Endothelial cell of umbilical vein (primary cell): ENCODE measurements at regions of chr22 and their contacts with region 1.

Region 1: DNA sequence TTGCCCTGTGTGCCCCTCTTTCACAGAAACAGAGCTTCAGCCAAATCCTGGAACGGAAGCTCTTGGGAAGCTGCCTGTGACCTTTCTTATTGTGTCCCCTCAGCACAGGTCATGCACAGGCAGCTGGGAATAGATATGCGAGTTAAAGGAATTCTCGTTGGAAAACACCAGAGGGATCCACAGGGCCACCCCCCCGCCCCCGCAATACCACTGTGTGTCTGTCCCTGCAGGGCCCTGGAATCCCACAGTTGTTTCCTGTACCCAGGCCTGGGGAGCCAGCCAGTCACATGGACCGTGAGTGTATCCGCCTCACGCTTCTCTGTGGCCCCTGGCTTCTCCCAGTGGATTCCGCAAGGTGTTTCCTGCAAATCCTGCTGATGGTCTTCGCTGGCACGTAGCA is 29.0 kb downstream of the TIMP3 start:
- DNase-seq: peak; percentile 58
- H3K4me3 ChIP-seq: no peak overlapping the region
- H3K27ac ChIP-seq: no peak overlapping the region
- H3K4me1 ChIP-seq: peaks cover 4% of the 10 kb centered on the region
- H3K27me3 ChIP-seq: no peaks in the 10 kb centered on the region
- CTCF ChIP-seq: no peak
- POLR2A ChIP-seq: no peak

Region 2: DNA sequence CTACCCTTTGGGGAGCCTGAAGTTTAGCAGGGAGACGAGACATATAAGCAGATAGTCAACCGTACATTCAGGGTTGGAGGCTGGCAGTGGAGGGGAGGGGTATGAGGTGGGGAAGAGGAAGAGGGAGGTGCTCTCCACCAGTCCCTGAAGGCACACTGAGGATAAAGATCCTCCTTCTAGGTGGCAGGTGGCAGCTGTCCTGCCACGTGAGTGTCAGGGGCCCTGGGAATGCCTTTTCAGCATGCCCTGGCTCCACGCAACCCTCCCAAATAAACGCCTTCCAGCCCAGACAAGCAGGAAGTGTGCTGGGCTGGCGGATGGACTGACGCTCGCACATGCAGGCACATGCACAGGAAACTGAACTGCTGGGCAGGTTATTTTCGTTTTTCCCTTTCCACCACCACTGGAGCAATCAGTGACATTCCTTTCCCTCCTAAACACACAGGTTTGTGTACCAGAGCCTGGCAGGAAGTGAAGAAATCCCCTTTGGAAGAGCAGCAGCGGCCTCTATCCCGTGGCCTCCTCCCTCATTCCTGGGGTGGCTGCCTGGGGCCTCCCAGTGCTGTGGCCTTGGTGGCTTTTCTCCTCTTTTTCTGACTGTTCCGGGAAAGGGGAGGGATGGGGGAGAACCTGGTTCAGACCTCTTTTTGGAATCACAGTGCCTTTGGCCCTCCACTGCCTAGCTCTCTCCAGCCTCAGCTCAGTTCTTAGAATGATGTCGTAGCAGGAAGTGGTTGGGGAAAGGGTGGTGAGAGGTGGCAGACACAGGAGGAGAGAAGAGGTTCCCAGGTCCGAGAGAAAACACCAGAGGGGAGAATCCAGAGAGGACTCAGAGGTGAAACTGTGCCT is 186.0 kb before region 1 on chr22:
- CTCF ChIA-PET with region 1: no interaction called
- POLR2A ChIA-PET with region 1: no interaction called
- dilution Hi-C with region 1: no loop called
- intact Hi-C with region 1: loop called (anchors 1 kb)
- DNase-seq: no peak
- H3K4me3 ChIP-seq: no peak overlapping the region
- H3K27ac ChIP-seq: no peak overlapping the region
- H3K4me1 ChIP-seq: no peaks in the 10 kb centered on the region
- H3K27me3 ChIP-seq: no peaks in the 10 kb centered on the region
- CTCF ChIP-seq: no peak
- POLR2A ChIP-seq: no peak

Region 3: DNA sequence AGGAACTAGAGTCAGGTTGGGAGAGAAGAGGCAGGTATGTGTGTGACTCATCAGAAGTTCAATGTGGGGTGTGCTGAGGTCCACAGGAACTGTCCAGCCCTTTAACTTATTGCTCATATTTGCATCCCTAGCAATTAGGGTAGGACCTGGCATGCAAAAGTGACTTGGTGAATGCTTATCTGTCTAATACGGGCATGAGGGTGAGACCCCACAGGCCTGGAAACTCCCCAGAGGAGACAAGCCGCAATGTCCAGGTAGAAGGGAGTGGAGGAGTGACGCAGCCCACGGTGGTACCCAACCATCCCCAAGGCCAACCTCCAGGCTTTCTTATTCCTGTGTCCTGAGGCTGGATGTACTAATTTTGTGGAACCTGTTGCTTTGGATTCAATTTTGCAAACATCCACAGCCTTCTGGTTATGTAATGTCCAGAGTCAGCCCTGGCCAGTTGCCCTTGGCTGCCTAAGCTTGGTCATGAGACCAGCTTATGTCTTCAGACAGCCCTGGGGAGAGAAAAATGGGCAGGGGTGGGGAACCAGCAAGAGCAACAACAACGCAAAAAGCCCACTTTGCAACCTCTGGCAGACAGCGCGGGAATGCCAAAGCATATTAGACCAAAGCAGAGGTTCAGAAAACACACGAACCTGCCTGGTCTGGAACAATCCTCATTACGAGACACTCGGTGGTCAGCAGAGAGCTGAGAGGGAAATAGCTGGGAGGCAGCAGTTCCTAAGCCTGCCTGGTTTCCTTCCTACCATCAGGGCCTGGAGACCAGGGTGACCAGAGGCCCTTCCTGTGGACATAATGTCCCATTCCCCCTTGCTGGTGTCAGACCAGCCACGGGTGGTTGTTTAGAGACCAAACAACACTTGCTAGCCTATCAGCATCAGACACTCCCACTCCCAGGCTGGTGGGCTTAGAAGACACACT is 20.4 kb after region 1 on chr22:
- CTCF ChIA-PET with region 1: no interaction called
- POLR2A ChIA-PET with region 1: no interaction called
- dilution Hi-C with region 1: no loop called
- intact Hi-C with region 1: no loop called
- DNase-seq: no peak
- H3K4me3 ChIP-seq: no peak overlapping the region
- H3K27ac ChIP-seq: no peak overlapping the region
- H3K4me1 ChIP-seq: no peaks in the 10 kb centered on the region
- H3K27me3 ChIP-seq: no peaks in the 10 kb centered on the region
- CTCF ChIP-seq: no peak
- POLR2A ChIP-seq: no peak